Activated CD4-positive, alpha-beta T cell treated with anti-CD3 and anti-CD28 coated beads for 36 hours (primary cell): ENCODE measurements at regions of chr17 and their contacts with region 1.

Region 1: DNA sequence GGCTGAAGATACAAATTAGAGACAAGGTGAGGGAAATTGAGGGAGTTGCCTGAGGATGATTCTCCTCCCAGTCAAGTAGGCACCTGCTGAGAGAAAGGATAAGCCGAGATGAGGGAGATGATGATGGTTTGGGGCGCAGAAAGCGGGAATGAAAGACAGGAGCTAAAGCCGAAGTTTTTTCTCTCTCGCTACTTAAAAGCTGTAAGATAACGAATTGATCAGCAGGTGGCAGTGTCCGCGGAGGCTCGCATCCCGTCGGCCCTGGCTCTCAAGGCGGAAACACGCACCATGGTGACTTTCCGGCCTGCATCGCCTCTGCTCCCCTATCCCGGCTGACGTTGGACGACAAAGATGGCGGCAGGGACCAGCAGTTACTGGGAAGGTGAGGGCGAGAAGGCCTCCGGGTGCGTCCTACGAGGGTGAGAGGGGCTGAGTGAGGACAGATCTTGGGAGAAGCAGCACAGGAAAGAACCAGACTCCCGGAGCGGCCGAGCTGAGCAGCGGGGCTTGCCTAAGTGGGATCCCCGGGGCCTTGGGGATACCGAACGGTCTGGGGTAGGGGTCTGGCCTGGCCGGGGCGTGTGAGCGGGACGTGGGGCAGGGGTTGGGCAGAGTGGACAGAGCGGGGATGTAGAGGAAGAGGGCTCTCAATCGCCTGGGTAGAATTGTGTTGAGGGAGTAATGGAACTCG is at the start of gene GOSR1:
- DNase-seq: peak; percentile 97
- ATAC-seq: peak; percentile 99
- H3K4me3 Mint-ChIP-seq: peak within 1 kb of the TSS; percentile 99
- H3K27ac Mint-ChIP-seq: peak within 1 kb of the TSS; percentile 96
- H3K4me1 Mint-ChIP-seq: peaks cover 36% of the 10 kb centered on the region
- H3K27me3 Mint-ChIP-seq: peaks cover 2% of the 10 kb centered on the region
- total RNA-seq, gene GOSR1: 43.5 to 53.0 TPM

Region 2: DNA sequence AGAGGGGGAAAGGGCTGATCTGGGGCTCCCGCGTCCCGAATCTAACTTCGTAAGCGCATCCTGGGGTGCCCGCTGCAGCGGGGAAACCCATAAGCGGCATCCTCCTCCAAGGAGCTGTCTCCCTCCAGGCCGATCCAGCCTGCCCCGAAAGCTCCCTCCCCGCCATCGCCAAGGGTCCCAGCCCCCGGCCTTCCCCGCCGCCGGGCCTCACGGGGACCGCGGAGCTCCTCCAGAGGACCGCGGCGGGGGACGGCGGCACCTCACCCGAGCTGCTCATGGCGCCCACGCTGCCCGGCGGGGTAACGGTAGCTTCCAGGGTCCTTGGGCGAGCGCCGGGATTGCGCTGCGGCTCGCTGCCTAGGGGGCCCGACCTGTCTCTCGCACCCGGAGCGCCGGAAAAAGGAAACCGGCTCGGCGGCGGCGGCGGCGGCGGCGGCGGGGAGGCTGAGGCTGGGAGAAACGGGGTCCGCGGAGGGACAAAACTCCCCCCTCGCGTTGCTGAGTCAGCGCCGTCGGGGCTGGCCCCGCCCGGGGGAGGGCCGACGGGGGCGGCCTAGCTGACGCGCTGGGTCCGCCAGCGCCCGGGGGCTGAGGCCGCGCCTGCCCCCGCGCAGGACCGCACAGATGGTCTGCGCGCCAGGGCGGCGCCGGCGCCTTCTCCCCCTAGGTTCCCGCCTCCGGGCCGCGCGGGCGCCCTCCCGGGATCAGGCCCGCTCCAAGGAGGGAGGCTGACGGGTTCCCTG is 185.5 kb before region 1 on chr17 and contains the start of gene BLMH:
- CTCF ChIA-PET with region 1: interaction called, 4 read pairs
- POLR2A ChIA-PET with region 1: no interaction called
- intact Hi-C with region 1: loop called in 1 of 2 experiments (anchors 1 kb)
- DNase-seq: peak; percentile 90
- ATAC-seq: peak; percentile 82
- H3K4me3 Mint-ChIP-seq: peak within 1 kb of the TSS; percentile 91
- H3K27ac Mint-ChIP-seq: peak within 1 kb of the TSS; percentile 94
- H3K4me1 Mint-ChIP-seq: peaks cover 13% of the 10 kb centered on the region
- H3K27me3 Mint-ChIP-seq: no peaks in the 10 kb centered on the region
- total RNA-seq, gene BLMH: 54.3 to 74.5 TPM

Region 3: GRCh38 chr17:30363715-30364202 is 113.5 kb before region 1 on chr17:
- CTCF ChIA-PET with region 1: interaction called, 5 read pairs
- POLR2A ChIA-PET with region 1: no interaction called
- intact Hi-C with region 1: loop called in 1 of 2 experiments (anchors 1 kb)
- DNase-seq: peak; percentile 92
- ATAC-seq: peak; percentile 96
- H3K4me3 Mint-ChIP-seq: no peak overlapping the region
- H3K27ac Mint-ChIP-seq: peak overlapping the region; percentile 85
- H3K4me1 Mint-ChIP-seq: peaks cover 33% of the 10 kb centered on the region
- H3K27me3 Mint-ChIP-seq: no peaks in the 10 kb centered on the region

Region 4: GRCh38 chr17:30378824-30379302 is 98.4 kb before region 1 on chr17 and contains the start of gene CPD:
- CTCF ChIA-PET with region 1: interaction called, 5 read pairs
- POLR2A ChIA-PET with region 1: no interaction called
- intact Hi-C with region 1: loop called in 1 of 2 experiments (anchors 1 kb)
- DNase-seq: peak; percentile 98
- ATAC-seq: peak; percentile 87
- H3K4me3 Mint-ChIP-seq: peak within 1 kb of the TSS; percentile 82
- H3K27ac Mint-ChIP-seq: peak within 1 kb of the TSS; percentile 80
- H3K4me1 Mint-ChIP-seq: peaks cover 63% of the 10 kb centered on the region
- H3K27me3 Mint-ChIP-seq: no peaks in the 10 kb centered on the region
- total RNA-seq, gene CPD: 29.0 to 36.3 TPM

Region 5: DNA sequence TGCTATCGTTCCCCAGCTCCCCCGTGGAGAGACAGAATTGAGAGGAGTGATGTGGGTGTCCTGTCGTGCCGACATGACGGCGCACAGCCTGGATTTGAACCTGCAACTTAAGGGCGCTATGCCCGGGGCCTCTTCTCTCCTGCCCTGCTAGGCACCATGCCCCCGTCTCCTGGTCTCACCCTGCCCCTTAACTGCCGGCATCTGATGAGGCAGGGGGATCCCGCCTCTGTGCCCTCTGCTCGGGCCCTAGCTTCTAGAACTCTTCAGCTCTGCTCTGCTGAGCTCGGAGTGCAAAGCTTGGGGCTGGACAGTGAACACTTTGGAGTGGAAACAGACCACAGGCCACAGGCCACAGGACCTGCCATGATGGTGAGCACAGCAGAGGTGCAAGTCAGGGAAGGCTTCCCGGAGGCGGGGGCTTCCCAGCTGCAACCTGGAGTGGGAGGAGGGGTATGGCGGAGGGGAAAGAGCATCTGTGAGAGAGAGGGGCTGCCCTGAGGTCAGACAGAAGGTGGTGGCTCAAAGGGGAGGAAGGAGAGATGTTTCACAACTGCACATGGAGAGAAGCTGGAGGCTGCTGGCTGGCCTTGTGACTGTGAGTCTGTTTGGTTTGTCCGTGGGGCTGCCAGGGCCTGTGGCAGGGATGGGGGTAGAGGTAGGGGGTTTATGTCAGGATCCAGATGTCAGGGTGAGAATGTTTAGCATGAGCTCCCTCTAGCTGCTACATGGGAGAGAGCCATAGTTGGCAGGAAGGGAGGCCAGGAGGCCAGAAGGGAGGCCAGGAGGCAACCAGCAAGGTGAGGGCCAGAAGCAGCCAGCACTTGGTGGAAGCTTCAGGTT is 239.5 kb after region 1 on chr17:
- CTCF ChIA-PET with region 1: interaction called, 3 read pairs
- POLR2A ChIA-PET with region 1: interaction called, 5 read pairs
- intact Hi-C with region 1: loop called in 1 of 2 experiments (anchors 5 kb)
- DNase-seq: no peak
- ATAC-seq: no peak
- H3K4me3 Mint-ChIP-seq: no peak overlapping the region
- H3K27ac Mint-ChIP-seq: no peak overlapping the region
- H3K4me1 Mint-ChIP-seq: peaks cover 8% of the 10 kb centered on the region
- H3K27me3 Mint-ChIP-seq: no peaks in the 10 kb centered on the region

Region 6: DNA sequence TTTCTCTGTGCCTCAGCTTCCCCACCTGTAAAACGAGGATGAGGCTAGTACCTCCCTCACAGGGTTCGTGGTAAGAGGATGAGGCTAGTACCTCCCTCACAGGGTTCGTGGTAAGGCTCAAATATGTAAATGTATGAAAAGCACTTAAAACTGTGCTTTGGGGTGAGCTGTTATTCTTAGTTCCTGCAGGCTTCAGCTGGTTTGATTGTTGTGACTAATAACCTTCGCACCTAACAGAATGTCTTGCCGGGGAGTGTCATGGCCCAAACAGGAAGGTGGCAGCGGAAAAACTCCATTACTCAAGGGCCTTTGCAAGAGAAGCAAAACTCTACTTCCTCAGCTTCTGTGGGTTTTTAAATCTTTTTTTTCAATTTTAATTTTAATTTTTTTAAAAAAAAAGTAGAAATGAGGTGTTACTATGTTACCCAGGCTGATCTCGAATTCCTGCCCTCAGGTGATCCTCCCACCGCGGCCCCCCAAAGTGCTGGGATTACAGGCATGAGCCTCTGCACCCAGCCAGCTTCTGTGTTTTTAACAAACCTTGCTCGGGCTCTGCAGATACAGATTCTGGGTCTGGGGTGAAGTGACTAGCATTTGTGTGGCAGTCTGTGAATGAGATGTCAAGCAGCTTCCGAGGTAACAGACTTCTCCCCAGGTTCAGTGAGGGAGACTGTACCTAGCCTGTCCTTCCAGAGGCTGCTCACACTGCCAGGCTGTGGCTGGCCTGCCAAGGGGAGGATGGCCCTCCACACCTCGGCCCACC is 1017.2 kb after region 1 on chr17:
- CTCF ChIA-PET with region 1: no interaction called
- POLR2A ChIA-PET with region 1: no interaction called
- intact Hi-C with region 1: loop called in 1 of 2 experiments (anchors 5 kb)
- DNase-seq: peak; percentile 82
- ATAC-seq: peak; percentile 86
- H3K4me3 Mint-ChIP-seq: peak overlapping the region; percentile 58
- H3K27ac Mint-ChIP-seq: peak overlapping the region; percentile 97
- H3K4me1 Mint-ChIP-seq: peaks cover 91% of the 10 kb centered on the region
- H3K27me3 Mint-ChIP-seq: no peaks in the 10 kb centered on the region